CD8-positive, alpha-beta T cell (primary cell): ENCODE measurements at regions of chr20 and their contacts with region 1.

Region 1: GRCh38 chr20:16801919-16802911 is 54.1 kb downstream of the OTOR start:
- DNase-seq: peak; percentile 12 to 62 (median 48)
- ATAC-seq: peak; percentile 42
- H3K4me3 ChIP-seq: no peak overlapping the region
- H3K4me3 Mint-ChIP-seq: no peak overlapping the region
- H3K27ac ChIP-seq: no peak overlapping the region
- H3K27ac Mint-ChIP-seq: no peak overlapping the region
- H3K4me1 ChIP-seq: no peaks in the 10 kb centered on the region
- H3K4me1 Mint-ChIP-seq: no peaks in the 10 kb centered on the region
- H3K27me3 ChIP-seq: no peaks in the 10 kb centered on the region
- H3K27me3 Mint-ChIP-seq: peaks cover 46% of the 10 kb centered on the region
- CTCF ChIP-seq: peak; percentile 82

Region 2: GRCh38 chr20:16821211-16822089 is 19.2 kb after region 1 on chr20:
- CTCF ChIA-PET with region 1: interaction called, 18 read pairs
- POLR2A ChIA-PET with region 1: no interaction called
- intact Hi-C with region 1: no loop called
- DNase-seq: peak in 3 of 9 experiments; percentile 8 to 50 (median 37)
- ATAC-seq: no peak
- H3K4me3 ChIP-seq: no peak overlapping the region
- H3K4me3 Mint-ChIP-seq: no peak overlapping the region
- H3K27ac ChIP-seq: no peak overlapping the region
- H3K27ac Mint-ChIP-seq: no peak overlapping the region
- H3K4me1 ChIP-seq: no peaks in the 10 kb centered on the region
- H3K4me1 Mint-ChIP-seq: no peaks in the 10 kb centered on the region
- H3K27me3 ChIP-seq: no peaks in the 10 kb centered on the region
- H3K27me3 Mint-ChIP-seq: peaks cover 15% of the 10 kb centered on the region
- CTCF ChIP-seq: peak; percentile 63

Region 3: GRCh38 chr20:17431621-17432364 is 629.6 kb after region 1 on chr20:
- CTCF ChIA-PET with region 1: interaction called, 7 read pairs
- POLR2A ChIA-PET with region 1: no interaction called
- intact Hi-C with region 1: loop called in 1 of 2 experiments (anchors 1 kb)
- DNase-seq: peak in 8 of 9 experiments; percentile 22 to 63 (median 51)
- ATAC-seq: no peak
- H3K4me3 ChIP-seq: no peak overlapping the region
- H3K4me3 Mint-ChIP-seq: no peak overlapping the region
- H3K27ac ChIP-seq: no peak overlapping the region
- H3K27ac Mint-ChIP-seq: no peak overlapping the region
- H3K4me1 ChIP-seq: no peaks in the 10 kb centered on the region
- H3K4me1 Mint-ChIP-seq: no peaks in the 10 kb centered on the region
- H3K27me3 ChIP-seq: peaks cover 4 to 5% of the 10 kb centered on the region in 2 experiments
- H3K27me3 Mint-ChIP-seq: peaks cover 27% of the 10 kb centered on the region
- CTCF ChIP-seq: peak; percentile 97

Region 4: DNA sequence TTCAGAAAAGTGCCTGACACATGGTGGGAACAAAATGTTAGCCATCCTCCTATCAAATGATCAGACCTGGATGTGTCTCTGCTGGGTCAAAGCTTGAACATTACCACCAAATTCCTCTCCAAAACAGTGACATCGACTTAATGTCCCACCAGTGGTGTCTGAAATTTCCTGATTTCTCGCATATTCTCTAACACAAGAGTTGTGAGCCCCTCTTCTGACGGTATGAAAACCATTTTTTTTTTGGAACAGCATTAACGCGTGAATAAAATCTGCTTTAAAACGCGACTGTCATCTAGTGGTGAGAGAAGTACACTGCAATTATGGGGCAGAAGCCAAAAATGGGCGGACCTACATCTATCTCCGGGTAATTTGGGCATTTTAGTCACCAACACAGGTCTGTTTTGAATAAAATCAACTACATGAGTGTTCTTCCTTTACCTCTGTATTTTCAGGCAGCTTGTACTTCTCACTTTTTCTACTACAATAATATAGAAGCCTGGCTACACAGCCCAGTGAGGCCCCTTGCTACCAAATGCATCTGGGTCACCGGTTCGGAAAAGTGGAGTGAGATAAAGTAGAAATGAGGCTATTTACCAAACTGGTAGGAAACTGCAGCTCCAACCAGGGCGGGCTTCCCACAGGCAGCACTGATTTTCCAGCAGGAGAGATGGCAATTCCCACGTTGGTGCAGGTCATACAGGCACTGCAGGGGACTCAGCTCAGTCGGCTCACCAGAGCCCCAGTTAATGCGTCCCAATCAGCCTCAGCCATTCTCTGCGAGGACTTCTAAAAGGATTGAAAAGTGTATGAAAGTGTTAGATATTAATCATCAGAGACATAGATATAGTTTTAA is 1194.0 kb after region 1 on chr20:
- CTCF ChIA-PET with region 1: no interaction called
- POLR2A ChIA-PET with region 1: no interaction called
- intact Hi-C with region 1: loop called in 1 of 2 experiments (anchors 10 kb)
- DNase-seq: peak in 6 of 9 experiments; percentile 11 to 78 (median 38)
- ATAC-seq: peak; percentile 97
- H3K4me3 ChIP-seq: no peak overlapping the region
- H3K4me3 Mint-ChIP-seq: no peak overlapping the region
- H3K27ac ChIP-seq: no peak overlapping the region
- H3K27ac Mint-ChIP-seq: no peak overlapping the region
- H3K4me1 ChIP-seq: no peaks in the 10 kb centered on the region
- H3K4me1 Mint-ChIP-seq: peaks cover 9% of the 10 kb centered on the region
- H3K27me3 ChIP-seq: no peaks in the 10 kb centered on the region
- H3K27me3 Mint-ChIP-seq: peaks cover 19% of the 10 kb centered on the region
- CTCF ChIP-seq: peak; percentile 97

Region 5: GRCh38 chr20:18019070-18019469 is 1216.9 kb after region 1 on chr20:
- CTCF ChIA-PET with region 1: no interaction called
- POLR2A ChIA-PET with region 1: no interaction called
- intact Hi-C with region 1: loop called in 1 of 2 experiments (anchors 5 kb)
- DNase-seq: peak in 2 of 9 experiments; percentile 31 to 43
- ATAC-seq: no peak
- H3K4me3 ChIP-seq: no peak overlapping the region
- H3K4me3 Mint-ChIP-seq: no peak overlapping the region
- H3K27ac ChIP-seq: no peak overlapping the region
- H3K27ac Mint-ChIP-seq: no peak overlapping the region
- H3K4me1 ChIP-seq: no peaks in the 10 kb centered on the region
- H3K4me1 Mint-ChIP-seq: no peaks in the 10 kb centered on the region
- H3K27me3 ChIP-seq: no peaks in the 10 kb centered on the region
- H3K27me3 Mint-ChIP-seq: no peaks in the 10 kb centered on the region
- CTCF ChIP-seq: no peak

Region 6: DNA sequence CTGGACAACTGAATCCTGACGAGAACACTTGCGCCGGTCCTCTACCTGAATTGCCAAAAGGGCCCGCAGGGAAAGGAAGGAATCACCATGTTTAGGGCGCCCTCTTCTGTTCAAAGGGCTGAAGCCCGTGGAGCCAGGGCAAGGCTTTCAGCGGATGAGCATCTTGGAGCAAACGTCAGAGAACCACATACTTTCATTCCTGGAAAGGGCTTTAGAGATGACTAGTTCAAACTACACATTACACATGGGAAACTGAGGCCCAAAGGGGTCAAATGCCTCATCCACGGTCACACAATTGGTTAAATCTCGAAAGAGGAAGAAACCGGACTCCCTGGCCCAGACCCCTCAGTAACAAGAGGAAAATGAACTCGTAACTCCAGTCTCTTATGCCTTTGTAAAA is 1474.6 kb after region 1 on chr20:
- CTCF ChIA-PET with region 1: no interaction called
- POLR2A ChIA-PET with region 1: no interaction called
- intact Hi-C with region 1: loop called in 1 of 2 experiments (anchors 5 kb)
- DNase-seq: peak; percentile 16 to 66 (median 47)
- ATAC-seq: no peak
- H3K4me3 ChIP-seq: no peak overlapping the region
- H3K4me3 Mint-ChIP-seq: no peak overlapping the region
- H3K27ac ChIP-seq: no peak overlapping the region
- H3K27ac Mint-ChIP-seq: no peak overlapping the region
- H3K4me1 ChIP-seq: peaks cover 3% of the 10 kb centered on the region
- H3K4me1 Mint-ChIP-seq: no peaks in the 10 kb centered on the region
- H3K27me3 ChIP-seq: peaks cover 0 to 2% of the 10 kb centered on the region in 2 experiments
- H3K27me3 Mint-ChIP-seq: peaks cover 46% of the 10 kb centered on the region
- CTCF ChIP-seq: peak; percentile 54